Activated CD4-positive, alpha-beta T cell treated with anti-CD3 and anti-CD28 coated beads, Interleukin-2, amount 10 ng/mL, durations not matched to agents 24 days and 14 days (primary cell): ENCODE measurements at regions of chr7 and their contacts with region 1.

Region 1: GRCh38 chr7:106285051-106285854 is 470 bp upstream of the NAMPT start:
- DNase-seq: peak; percentile 99
- H3K4me3 Mint-ChIP-seq: peak overlapping the region; percentile 93
- H3K27ac Mint-ChIP-seq: peak overlapping the region; percentile 99
- H3K4me1 Mint-ChIP-seq: peaks cover 32% of the 10 kb centered on the region
- H3K27me3 Mint-ChIP-seq: no peaks in the 10 kb centered on the region

Region 2: DNA sequence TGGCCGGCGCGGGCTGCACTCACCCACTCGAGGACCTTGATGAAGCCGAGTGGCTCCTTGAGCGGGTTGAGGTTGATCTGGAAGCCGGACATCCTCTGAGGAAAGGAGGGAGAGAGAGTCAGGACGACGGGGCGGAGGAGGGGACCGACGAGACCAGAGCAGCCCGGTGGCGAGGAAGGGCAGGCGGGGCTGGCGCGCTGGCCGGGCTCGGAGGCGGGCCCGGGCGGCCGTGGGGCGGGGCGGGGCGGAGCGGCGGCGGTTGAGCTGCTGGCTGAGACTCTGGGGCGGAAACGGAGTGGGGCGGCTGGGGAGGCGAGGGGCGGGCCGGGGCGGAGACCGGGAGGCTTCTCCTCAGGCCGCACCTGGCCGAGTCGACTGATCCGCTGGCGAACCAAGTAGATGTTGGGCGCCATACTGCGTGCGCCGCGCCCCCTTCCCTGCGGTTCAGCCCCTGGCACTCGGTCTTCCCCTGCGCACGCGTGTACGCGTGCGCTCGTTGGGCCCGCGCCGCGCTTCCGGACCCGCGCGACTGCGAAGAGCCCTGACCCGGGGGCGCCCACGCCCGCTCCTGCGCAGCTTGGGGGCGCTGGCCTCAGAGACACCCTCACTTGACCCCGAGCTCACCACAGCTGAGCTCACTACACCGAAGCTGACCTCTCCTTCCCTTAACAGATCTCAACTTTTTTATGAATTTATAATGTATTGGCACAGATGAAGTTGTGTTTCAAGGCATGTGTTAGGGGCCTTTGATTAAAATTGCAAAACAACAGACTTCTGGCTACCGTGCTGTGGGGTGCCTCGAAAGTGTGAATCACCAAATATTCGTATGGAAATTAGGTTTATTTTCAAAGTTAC is 172.9 kb before region 1 on chr7 and contains the start of gene SYPL1:
- intact Hi-C with region 1: loop called (anchors 1 kb)
- DNase-seq: peak; percentile 97
- H3K4me3 Mint-ChIP-seq: peak within 1 kb of the TSS; percentile 86
- H3K27ac Mint-ChIP-seq: peak within 1 kb of the TSS; percentile 92
- H3K4me1 Mint-ChIP-seq: peaks cover 44% of the 10 kb centered on the region
- H3K27me3 Mint-ChIP-seq: peaks cover 3% of the 10 kb centered on the region
- total RNA-seq, gene SYPL1: 26.6 and 27.2 TPM in 2 replicates

Region 3: GRCh38 chr7:106367018-106367420 is 81.8 kb after region 1 on chr7:
- intact Hi-C with region 1: loop called (anchors 2 kb)
- DNase-seq: no peak
- H3K4me3 Mint-ChIP-seq: no peak overlapping the region
- H3K27ac Mint-ChIP-seq: peak overlapping the region; percentile 59
- H3K4me1 Mint-ChIP-seq: peaks cover 26% of the 10 kb centered on the region
- H3K27me3 Mint-ChIP-seq: peaks cover 14% of the 10 kb centered on the region

Region 4: DNA sequence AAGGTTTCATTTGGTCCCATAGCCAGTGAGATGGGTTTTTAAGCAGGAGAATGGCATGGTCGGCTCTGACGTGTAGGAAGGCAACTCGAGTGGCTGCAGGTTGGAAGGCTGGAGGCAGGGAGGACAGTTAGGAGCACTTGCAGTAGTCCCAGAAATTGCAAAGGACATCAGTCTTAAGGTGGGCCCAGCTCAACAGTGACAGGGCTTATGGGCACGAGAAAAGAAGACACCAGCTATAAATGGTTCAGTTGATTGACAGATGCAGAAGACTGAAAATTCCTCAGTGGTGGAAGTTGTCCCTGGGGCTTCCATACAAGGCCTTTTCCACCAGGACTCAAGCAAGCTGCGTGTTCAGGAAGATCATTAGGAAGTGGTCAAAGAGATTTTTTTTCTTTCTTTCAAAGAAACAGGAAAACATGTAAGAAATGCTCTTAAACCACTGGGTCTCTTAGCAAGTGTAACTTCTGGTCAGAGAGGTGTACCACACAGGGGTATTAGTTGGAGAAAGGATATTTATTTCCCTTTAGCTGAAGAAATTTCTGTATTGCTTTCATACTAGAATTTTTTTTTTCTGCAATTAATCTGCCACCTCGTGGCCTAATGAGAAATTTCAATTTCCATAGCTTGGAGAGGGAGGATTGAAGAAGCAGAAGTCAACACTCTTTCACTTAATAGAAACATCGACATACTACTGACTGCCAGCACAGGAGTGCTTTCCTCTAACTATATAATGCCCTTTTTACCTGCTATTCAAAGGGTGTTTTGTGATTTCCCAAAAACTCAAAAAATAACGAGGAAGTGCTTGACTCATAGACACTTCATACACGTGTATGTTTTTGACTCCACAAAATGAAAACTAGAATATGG is 177.0 kb after region 1 on chr7:
- intact Hi-C with region 1: loop called (anchors 2 kb)
- DNase-seq: peak; percentile 76
- H3K4me3 Mint-ChIP-seq: no peak overlapping the region
- H3K27ac Mint-ChIP-seq: no peak overlapping the region
- H3K4me1 Mint-ChIP-seq: peaks cover 19% of the 10 kb centered on the region
- H3K27me3 Mint-ChIP-seq: no peaks in the 10 kb centered on the region

Region 5: DNA sequence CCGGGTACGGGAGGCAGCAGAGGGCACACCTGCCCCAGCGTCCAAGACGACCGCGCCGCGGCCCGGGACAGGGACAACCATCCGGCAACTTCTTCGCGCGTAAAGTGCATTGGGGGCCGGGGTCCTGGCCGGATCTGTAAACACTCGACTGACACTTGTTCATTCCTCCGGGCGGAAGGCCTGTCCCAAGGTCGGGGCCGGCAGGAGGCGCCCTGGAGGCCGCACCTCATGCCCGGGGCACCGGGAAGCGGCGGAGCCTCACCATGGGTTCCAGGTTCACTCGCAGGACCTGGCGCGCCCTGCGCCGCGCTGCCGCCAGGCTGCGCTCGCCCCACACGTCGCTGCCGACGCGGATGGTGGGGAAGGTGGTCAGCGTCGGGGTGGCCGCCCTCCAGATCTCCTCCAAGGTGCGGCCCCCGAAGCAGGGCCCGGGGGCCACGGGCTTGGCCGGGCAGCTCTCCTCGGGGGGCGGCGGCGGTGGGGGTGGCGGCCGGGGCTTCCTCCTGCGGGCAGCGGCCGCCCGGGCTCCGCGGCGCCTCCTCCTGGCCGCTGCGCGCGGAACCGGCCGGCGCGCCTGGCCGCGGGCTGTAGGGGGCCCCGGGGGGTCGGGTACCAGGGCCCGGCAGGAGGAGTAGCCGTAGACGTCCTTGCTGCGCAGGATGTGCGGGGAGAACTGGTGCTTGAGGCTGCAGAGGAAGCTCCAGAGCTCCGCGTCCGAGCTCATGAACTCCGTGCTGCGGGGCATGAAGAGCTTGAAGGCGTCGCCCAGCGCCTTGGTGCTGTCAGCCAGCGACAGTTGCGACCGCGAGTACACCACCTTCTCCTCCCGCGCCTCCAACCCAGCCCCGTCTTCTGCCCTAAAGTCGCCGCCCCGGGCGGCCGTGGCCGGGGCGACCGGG is 375.0 kb after region 1 on chr7:
- intact Hi-C with region 1: loop called (anchors 2 kb)
- DNase-seq: peak; percentile 94
- H3K4me3 Mint-ChIP-seq: peak overlapping the region; percentile 88
- H3K27ac Mint-ChIP-seq: peak overlapping the region; percentile 94
- H3K4me1 Mint-ChIP-seq: peaks cover 27% of the 10 kb centered on the region
- H3K27me3 Mint-ChIP-seq: no peaks in the 10 kb centered on the region

Region 6: GRCh38 chr7:106774768-106775551 is 489.7 kb after region 1 on chr7:
- intact Hi-C with region 1: loop called (anchors 2 kb)
- DNase-seq: no peak
- H3K4me3 Mint-ChIP-seq: no peak overlapping the region
- H3K27ac Mint-ChIP-seq: peak overlapping the region; percentile 45
- H3K4me1 Mint-ChIP-seq: peaks cover 28% of the 10 kb centered on the region
- H3K27me3 Mint-ChIP-seq: no peaks in the 10 kb centered on the region